Caco-2 (cell line): ENCODE measurements at regions of chr12 and their contacts with region 1.

Region 1: DNA sequence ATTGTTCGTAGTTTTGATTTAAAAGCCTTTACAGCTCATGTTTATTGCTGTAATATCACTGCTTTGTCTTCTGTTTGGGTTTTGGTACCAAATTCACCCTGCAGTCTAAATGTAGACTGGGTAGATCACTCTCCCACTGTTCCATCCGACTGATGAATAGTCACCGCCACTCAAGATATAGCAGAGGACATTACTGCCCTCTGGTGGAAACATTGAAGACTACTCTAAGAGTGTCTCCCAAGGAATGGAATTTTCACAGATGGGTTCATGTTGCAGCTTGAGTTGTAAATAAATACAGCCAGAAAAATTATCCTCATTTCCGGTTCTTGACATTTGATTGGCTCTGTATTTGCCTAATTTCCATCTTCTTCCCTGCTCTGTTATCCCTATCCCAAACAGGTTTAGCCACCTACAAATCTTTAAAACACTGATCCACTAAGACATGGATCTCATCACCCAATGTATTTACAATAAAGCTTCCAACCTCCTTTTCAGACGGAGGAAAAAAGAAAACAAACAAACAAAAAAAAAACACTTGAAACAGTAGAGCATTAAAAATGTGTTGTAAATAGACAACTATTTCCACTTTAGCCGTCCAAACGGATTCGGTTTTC is 198.3 kb upstream of the CPNE8 start:
- DNase-seq: peak in 1 of 2 experiments; percentile 68
- H3K4me3 ChIP-seq: no peak overlapping the region
- H3K4me3 Mint-ChIP-seq: no peak overlapping the region
- H3K27ac Mint-ChIP-seq: no peak overlapping the region
- H3K4me1 ChIP-seq: no peaks in the 10 kb centered on the region
- H3K4me1 Mint-ChIP-seq: no peaks in the 10 kb centered on the region
- H3K27me3 ChIP-seq: no peaks in the 10 kb centered on the region
- H3K27me3 Mint-ChIP-seq: peaks cover 2% of the 10 kb centered on the region
- CTCF ChIP-seq: peak; percentile 59 to 78

Region 2: DNA sequence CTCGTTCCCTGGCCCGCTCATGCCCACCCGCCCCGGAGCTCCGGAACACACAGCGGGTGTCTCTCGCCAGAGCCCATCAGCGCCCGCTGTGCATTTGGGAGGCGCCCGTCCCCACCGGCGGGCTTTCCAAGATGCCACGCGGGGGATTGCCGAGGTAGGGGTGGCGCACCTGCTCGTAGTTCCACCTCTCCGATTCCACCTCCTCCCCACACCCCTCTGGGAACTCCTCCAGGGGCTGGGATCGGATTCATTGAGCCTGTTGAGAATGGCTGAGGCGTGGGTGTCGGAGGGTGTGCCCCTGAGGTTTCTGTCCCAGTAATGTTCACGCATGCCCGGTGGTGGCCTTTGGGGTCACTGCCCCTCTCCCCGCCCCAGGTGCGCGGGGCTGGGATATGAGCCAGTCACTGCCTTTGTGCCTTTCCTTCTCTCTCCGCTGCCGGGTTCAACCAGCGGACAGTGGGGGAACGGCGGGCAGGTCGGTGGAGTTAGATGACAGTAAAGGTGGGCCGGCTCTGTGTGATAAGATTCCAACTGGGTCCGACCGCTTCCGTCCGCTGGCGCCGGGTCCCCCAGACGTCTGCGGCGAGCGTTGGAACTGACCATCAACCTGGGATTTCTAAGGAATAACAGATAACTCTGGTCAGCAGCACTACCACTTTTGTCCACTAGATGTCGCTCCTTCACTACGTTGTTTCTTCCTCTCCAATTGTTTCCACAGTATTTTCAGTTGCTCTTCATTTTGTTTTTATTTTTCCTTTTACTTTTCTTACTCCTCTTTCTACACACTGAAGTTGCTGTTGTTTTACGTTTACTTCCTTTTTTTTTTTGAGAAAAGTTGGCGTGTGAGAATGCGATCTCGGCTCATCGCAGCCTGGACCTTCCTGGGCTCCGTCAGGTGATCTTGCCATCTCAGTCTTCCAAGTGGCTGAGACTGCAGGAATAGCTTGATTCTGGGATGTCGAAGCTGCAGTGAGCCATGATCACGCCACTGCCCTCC is 965.1 kb before region 1 on chr12:
- CTCF ChIA-PET with region 1: no interaction called
- POLR2A ChIA-PET with region 1: no interaction called
- intact Hi-C with region 1: loop called (anchors 2 kb)
- DNase-seq: peak; percentile 75 to 82
- H3K4me3 ChIP-seq: peak overlapping the region; percentile 28
- H3K4me3 Mint-ChIP-seq: peak overlapping the region; percentile 72
- H3K27ac Mint-ChIP-seq: no peak overlapping the region
- H3K4me1 ChIP-seq: peaks cover 4% of the 10 kb centered on the region; the same call in 1 of the 2 replicates
- H3K4me1 Mint-ChIP-seq: no peaks in the 10 kb centered on the region
- H3K27me3 ChIP-seq: no peaks in the 10 kb centered on the region
- H3K27me3 Mint-ChIP-seq: peaks cover 3% of the 10 kb centered on the region
- CTCF ChIP-seq: peak; percentile 91 to 94

Region 3: GRCh38 chr12:38332814-38333213 is 770.8 kb before region 1 on chr12:
- CTCF ChIA-PET with region 1: no interaction called
- POLR2A ChIA-PET with region 1: no interaction called
- intact Hi-C with region 1: loop called (anchors 1 kb)
- DNase-seq: no peak
- H3K4me3 ChIP-seq: no peak overlapping the region
- H3K4me3 Mint-ChIP-seq: no peak overlapping the region
- H3K27ac Mint-ChIP-seq: no peak overlapping the region
- H3K4me1 ChIP-seq: no peaks in the 10 kb centered on the region
- H3K4me1 Mint-ChIP-seq: no peaks in the 10 kb centered on the region
- H3K27me3 ChIP-seq: no peaks in the 10 kb centered on the region
- H3K27me3 Mint-ChIP-seq: no peaks in the 10 kb centered on the region
- CTCF ChIP-seq: no peak

Region 4: DNA sequence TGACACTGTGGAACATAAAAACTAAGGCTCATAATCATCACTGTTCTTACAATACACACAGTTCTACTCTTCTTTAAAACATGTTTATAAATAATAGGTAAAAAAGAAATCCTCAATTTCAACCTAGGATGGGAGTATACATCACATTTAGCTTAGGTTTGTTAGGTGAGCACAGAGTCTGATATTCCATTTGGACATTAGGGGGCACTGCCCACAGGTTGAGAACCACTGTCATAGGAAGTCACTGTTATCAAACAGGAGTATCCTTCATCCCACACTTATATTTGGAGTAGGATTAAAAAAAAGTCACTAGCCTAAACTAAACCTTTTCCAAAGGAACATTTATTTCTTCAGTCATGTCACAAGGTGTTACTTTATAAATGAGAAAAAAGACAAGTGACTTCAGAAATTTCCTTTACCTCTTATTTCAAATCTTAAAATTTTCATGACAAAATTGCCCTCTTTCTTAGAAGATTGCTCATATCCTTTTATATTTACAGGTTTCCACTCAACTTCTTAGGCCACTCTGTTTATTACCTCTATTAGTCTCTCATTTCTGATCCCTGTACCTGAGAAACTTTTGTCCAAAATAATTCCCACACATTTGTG is 438.9 kb before region 1 on chr12:
- CTCF ChIA-PET with region 1: no interaction called
- POLR2A ChIA-PET with region 1: no interaction called
- intact Hi-C with region 1: loop called (anchors 2 kb)
- DNase-seq: peak in 1 of 2 experiments; percentile 45
- H3K4me3 ChIP-seq: no peak overlapping the region
- H3K4me3 Mint-ChIP-seq: no peak overlapping the region
- H3K27ac Mint-ChIP-seq: no peak overlapping the region
- H3K4me1 ChIP-seq: no peaks in the 10 kb centered on the region
- H3K4me1 Mint-ChIP-seq: peaks cover 6% of the 10 kb centered on the region
- H3K27me3 ChIP-seq: no peaks in the 10 kb centered on the region
- H3K27me3 Mint-ChIP-seq: no peaks in the 10 kb centered on the region
- CTCF ChIP-seq: peak; percentile 48 to 82

Region 5: DNA sequence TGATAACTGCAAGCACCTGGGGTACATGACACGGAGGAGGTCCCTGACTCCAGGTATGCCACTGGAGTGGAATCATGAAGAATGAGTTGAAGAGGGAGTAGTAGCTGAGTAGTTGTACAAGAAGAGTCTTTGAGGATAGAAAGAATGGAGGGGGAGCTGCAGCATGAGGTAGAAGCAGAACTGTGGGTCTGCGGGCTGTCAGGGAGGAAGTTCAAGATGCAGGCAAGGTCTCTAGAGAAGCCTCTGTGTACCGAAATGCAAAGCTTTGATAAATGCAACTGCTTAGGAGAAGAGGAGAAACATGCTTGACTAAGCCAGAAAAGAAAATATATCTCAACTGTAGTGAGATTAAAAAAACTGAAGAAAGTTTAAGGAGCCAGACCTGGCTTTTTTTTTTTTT is 289.7 kb before region 1 on chr12:
- CTCF ChIA-PET with region 1: no interaction called
- POLR2A ChIA-PET with region 1: no interaction called
- intact Hi-C with region 1: loop called (anchors 10 kb)
- DNase-seq: no peak
- H3K4me3 ChIP-seq: no peak overlapping the region
- H3K4me3 Mint-ChIP-seq: no peak overlapping the region
- H3K27ac Mint-ChIP-seq: no peak overlapping the region
- H3K4me1 ChIP-seq: no peaks in the 10 kb centered on the region
- H3K4me1 Mint-ChIP-seq: no peaks in the 10 kb centered on the region
- H3K27me3 ChIP-seq: no peaks in the 10 kb centered on the region
- H3K27me3 Mint-ChIP-seq: no peaks in the 10 kb centered on the region
- CTCF ChIP-seq: no peak

Region 6: DNA sequence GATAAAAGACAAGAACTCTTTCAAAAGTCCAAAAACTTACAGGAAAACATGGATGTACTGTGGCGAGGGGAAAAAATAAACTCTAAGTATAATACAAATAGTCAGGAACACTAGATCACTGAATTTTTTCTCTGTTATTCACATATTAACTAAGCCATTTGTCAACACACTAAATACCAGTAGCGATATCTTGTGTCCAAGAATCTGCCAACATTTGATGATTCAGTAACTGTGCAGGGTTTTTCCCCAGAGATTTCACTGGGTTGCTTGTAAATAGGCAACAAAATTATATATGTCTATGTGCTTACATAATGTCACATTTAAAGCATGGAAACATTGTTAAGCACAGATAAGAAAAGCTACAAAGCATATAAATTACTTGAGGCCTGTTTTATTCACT is 133.3 kb after region 1 on chr12:
- CTCF ChIA-PET with region 1: no interaction called
- POLR2A ChIA-PET with region 1: no interaction called
- intact Hi-C with region 1: loop called (anchors 5 kb)
- DNase-seq: peak in 1 of 2 experiments; percentile 49
- H3K4me3 ChIP-seq: no peak overlapping the region
- H3K4me3 Mint-ChIP-seq: no peak overlapping the region
- H3K27ac Mint-ChIP-seq: no peak overlapping the region
- H3K4me1 ChIP-seq: peaks cover 52% of the 10 kb centered on the region
- H3K4me1 Mint-ChIP-seq: peaks cover 29% of the 10 kb centered on the region
- H3K27me3 ChIP-seq: no peaks in the 10 kb centered on the region
- H3K27me3 Mint-ChIP-seq: no peaks in the 10 kb centered on the region
- CTCF ChIP-seq: no peak

Region 7: GRCh38 chr12:39272871-39273770 is 169.5 kb after region 1 on chr12:
- CTCF ChIA-PET with region 1: interaction called, 7 read pairs
- POLR2A ChIA-PET with region 1: no interaction called
- intact Hi-C with region 1: loop called (anchors 1 kb)
- DNase-seq: peak in 1 of 2 experiments; percentile 69
- H3K4me3 ChIP-seq: no peak overlapping the region
- H3K4me3 Mint-ChIP-seq: no peak overlapping the region
- H3K27ac Mint-ChIP-seq: no peak overlapping the region
- H3K4me1 ChIP-seq: no peaks in the 10 kb centered on the region; the same call in 1 of the 2 replicates
- H3K4me1 Mint-ChIP-seq: peaks cover 9% of the 10 kb centered on the region
- H3K27me3 ChIP-seq: no peaks in the 10 kb centered on the region
- H3K27me3 Mint-ChIP-seq: no peaks in the 10 kb centered on the region
- CTCF ChIP-seq: peak; percentile 70 to 78